Uterus (tissue), 4 donors: ENCODE measurements at regions of chr5 and their contacts with region 1.

Region 1: GRCh38 chr5:179345433-179346321 is at the start of gene ADAMTS2:
- DNase-seq: peak; percentile 77 to 80
- H3K4me3 ChIP-seq: peak within 1 kb of the TSS; percentile 48 to 81
- H3K27ac ChIP-seq: peak within 1 kb of the TSS; percentile 79 to 84
- H3K4me1 ChIP-seq: no peaks in the 10 kb centered on the region
- H3K27me3 ChIP-seq: no peaks in the 10 kb centered on the region
- CTCF ChIP-seq: peak in 1 of 4 experiments; percentile 4
- POLR2A ChIP-seq: no peak
- total RNA-seq, gene ADAMTS2: 4.1 to 97.1 (median 40.3) TPM

Region 2: GRCh38 chr5:179166886-179167841 is 178.5 kb before region 1 on chr5:
- intact Hi-C with region 1: loop called (anchors 5 kb)
- DNase-seq: peak; percentile 68 to 73
- H3K4me3 ChIP-seq: peak overlapping the region in 1 of 2 donors; percentile 24
- H3K27ac ChIP-seq: peak overlapping the region; percentile 33 to 43
- H3K4me1 ChIP-seq: no peaks in the 10 kb centered on the region
- H3K27me3 ChIP-seq: no peaks in the 10 kb centered on the region
- CTCF ChIP-seq: peak; percentile 86 to 99 (median 93)
- POLR2A ChIP-seq: peak in 1 of 2 donors; percentile 36

Region 3: DNA sequence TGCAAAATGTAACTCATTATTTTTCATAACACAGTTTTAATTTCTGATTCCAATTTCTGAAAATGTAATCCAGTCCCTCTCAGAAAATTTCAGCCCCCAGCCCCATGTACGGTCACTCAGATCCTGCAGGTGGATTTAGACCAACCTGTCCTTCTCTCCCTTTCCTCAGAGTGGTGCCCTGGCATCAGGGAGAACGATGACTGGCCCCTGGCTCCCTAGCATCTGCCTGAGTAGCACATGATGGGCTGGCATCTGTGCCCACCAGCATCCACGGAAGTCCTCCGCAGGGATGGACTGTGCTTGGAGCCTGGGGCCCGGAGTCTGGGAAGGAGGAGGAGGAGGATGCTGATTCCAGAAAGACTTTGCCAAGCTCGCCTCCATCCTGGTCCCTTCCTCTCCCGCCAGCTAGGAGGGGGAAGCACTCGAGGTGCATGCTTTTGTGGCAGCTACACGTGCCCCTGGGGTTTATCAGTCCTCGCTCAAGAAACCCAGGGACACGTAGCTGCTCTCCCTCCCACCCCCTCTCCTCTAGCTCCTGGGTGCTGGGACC is 150.3 kb after region 1 on chr5:
- intact Hi-C with region 1: loop called (anchors 10 kb)
- DNase-seq: no peak
- H3K4me3 ChIP-seq: no peak overlapping the region
- H3K27ac ChIP-seq: no peak overlapping the region
- H3K4me1 ChIP-seq: no peaks in the 10 kb centered on the region
- H3K27me3 ChIP-seq: peaks cover 0 to 4% of the 10 kb centered on the region in 2 donors
- CTCF ChIP-seq: no peak
- POLR2A ChIP-seq: no peak